A549 (cell line): ENCODE measurements at regions of chr16 and their contacts with region 1.

Region 1: DNA sequence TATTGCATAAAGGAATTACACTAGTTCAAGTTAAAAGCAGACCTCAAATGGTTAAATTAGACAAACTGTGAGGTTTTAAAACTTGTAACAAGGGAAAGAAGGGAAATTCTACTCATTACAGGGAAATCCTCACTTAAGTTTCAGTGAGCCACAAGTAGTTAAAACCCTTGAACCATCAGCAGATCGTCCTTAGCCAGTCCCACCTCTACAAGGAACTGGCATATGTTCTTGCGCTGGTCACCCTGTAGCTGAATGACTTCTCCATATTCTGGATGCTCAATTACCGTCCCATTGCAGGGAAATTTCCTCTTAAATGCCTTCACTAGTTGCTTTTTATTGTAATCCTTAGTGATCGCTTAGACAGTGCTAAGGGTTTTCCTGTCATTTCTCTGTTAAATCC is 5.5 kb downstream of the PRSS21 start:
- DNase-seq: no peak
- ATAC-seq: no peak
- H3K4me3 ChIP-seq: no peak overlapping the region
- H3K27ac ChIP-seq: no peak overlapping the region
- H3K4me1 ChIP-seq: no peaks in the 10 kb centered on the region
- CTCF ChIP-seq: no peak
- EP300 ChIP-seq: no peak
- POLR2A ChIP-seq: no peak
- RAD21 ChIP-seq: no peak

Region 2: GRCh38 chr16:2770057-2770951 is 52.2 kb before region 1 on chr16:
- CTCF ChIA-PET with region 1: interaction called, 10 read pairs
- POLR2A ChIA-PET with region 1: interaction called, 3 read pairs
- DNase-seq: peak in 1 of 2 experiments; percentile 55
- ATAC-seq: peak; percentile 37 to 39; a peak in 5 of 6 replicates
- H3K4me3 ChIP-seq: no peak overlapping the region
- H3K27ac ChIP-seq: peak overlapping the region; percentile 15 to 62; a peak in 3 of 6 replicates
- H3K4me1 ChIP-seq: peaks cover 48% of the 10 kb centered on the region
- CTCF ChIP-seq: no peak; the same call in 2 of the 3 replicates
- EP300 ChIP-seq: no peak
- POLR2A ChIP-seq: no peak
- RAD21 ChIP-seq: no peak

Region 3: DNA sequence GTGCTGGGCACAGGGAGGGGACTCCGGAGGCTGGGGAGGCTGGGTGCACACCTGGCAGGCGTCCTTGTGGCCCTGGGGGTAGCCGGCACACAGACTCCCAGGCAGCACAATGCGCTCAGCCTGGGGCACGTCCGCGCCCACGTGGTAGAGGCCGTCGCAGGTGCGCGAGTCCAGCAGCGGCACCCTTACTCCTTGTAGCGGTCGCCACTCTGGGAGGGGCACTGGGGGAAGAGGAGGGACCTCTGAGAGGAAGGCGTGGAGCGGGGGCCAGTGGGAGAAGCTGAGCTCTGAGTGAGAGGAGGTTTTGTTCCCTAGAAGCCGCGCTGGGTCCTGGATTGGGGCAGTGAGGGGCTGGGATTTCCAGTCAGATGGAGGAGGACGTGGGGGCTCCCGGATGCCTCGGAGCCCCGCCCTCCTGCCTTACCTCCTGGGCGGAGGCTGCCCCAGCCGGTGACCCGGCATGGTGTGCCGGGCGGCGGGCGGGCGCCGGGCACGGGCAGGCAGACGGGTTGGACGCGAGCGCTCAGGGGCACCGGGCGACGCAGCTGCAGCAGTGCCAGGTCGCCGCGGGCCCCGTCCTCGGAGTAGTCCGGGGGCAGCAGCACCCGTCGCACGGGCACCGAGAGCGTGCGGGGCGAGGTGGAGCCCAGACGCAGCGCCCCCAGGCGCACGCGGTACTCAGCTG is 37.4 kb before region 1 on chr16:
- CTCF ChIA-PET with region 1: interaction called, 15 read pairs
- POLR2A ChIA-PET with region 1: no interaction called
- DNase-seq: no peak
- ATAC-seq: no peak
- H3K4me3 ChIP-seq: no peak overlapping the region
- H3K27ac ChIP-seq: no peak overlapping the region
- H3K4me1 ChIP-seq: no peaks in the 10 kb centered on the region
- CTCF ChIP-seq: no peak
- EP300 ChIP-seq: no peak
- POLR2A ChIP-seq: no peak
- RAD21 ChIP-seq: no peak